Heart right ventricle (tissue), 16 donors: ENCODE measurements at regions of chr12 and their contacts with region 1.

Region 1: GRCh38 chr12:89642959-89643358 is 65.7 kb downstream of the ATP2B1 start:
- DNase-seq: no peak
- ATAC-seq: no peak
- H3K4me3 ChIP-seq: no peak overlapping the region
- H3K27ac ChIP-seq: no peak overlapping the region
- H3K4me1 ChIP-seq: peaks cover 0 to 4% (median 0%) of the 10 kb centered on the region in 9 donors
- H3K27me3 ChIP-seq: no peaks in the 10 kb centered on the region
- CTCF ChIP-seq: no peak

Region 2: DNA sequence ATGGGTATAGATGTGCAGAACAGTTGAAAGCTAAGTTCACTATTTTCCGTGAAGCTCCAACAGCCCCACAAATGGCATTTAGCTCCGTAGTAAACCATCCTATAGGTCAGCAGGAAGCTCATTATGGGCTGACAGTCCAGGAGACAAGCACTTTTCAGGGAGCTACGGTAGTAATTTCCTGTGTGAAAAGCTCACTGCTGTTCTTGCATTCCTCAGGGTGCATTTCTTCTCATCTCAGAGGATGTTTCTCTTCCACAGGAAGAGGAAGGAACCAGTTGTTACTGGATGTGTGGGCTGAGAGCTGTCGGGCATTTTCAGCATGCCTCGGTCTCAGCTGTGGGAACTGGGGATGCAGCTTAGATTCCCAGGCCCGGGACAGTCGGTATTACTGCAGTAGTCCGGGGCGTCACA is 191.1 kb before region 1 on chr12:
- intact Hi-C with region 1: no loop called
- DNase-seq: peak; percentile 35 to 38
- ATAC-seq: peak; percentile 53 to 78 (median 72)
- H3K4me3 ChIP-seq: peak overlapping the region in 2 of 10 donors; percentile 0 to 7
- H3K27ac ChIP-seq: peak overlapping the region in 9 of 10 donors; percentile 24 to 85 (median 71)
- H3K4me1 ChIP-seq: peaks cover 0 to 43% (median 41%) of the 10 kb centered on the region in 9 donors
- H3K27me3 ChIP-seq: no peaks in the 10 kb centered on the region
- CTCF ChIP-seq: no peak

Region 3: GRCh38 chr12:89632778-89633177 is 10.2 kb before region 1 on chr12:
- intact Hi-C with region 1: loop called in 1 of 10 experiments (anchors 1 kb)
- DNase-seq: no peak
- ATAC-seq: no peak
- H3K4me3 ChIP-seq: no peak overlapping the region
- H3K27ac ChIP-seq: no peak overlapping the region
- H3K4me1 ChIP-seq: no peaks in the 10 kb centered on the region
- H3K27me3 ChIP-seq: no peaks in the 10 kb centered on the region
- CTCF ChIP-seq: no peak